SK-N-SH (cell line): ENCODE measurements at regions of chr5 and their contacts with region 1.

Region 1: DNA sequence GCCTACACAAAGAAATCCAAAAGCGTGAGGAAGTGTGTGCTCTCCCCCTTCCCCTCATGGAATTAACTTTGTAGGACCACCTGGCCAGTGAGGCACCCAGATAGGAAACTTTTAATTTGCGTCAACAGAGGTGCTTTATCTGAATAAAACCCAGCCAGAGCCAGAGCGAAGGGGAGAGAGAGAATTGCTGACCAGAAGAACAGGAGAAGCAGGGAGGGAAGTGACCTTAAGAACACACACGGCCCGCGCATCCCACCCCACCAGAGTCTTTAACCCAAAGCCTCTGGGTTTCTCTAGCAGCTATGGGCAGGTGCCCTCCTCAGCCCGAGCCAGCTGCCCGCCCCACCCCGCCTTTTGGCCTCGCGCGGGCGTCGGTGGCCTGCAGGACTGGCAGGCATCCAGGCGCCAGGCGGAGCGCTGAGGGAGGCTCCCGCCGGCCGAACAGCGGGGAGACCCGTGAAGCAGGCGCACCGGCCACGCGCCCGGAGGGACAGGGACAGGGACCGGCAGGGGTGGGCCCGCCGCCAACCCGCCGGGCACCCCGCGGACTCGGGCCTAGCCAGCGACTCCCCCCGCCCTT is 580 bp downstream of the ERAP1 start:
- DNase-seq: peak; percentile 89
- H3K4me3 ChIP-seq: peak overlapping the region; percentile 66 to 81
- H3K27ac ChIP-seq: peak overlapping the region; percentile 90 to 92
- H3K4me1 ChIP-seq: peaks cover 3 to 8% of the 10 kb centered on the region in 2 experiments; a peak in 3 of 4 replicates
- H3K27me3 ChIP-seq: no peaks in the 10 kb centered on the region
- CTCF ChIP-seq: no peak
- EP300 ChIP-seq: no peak
- RAD21 ChIP-seq: no peak

Region 2: DNA sequence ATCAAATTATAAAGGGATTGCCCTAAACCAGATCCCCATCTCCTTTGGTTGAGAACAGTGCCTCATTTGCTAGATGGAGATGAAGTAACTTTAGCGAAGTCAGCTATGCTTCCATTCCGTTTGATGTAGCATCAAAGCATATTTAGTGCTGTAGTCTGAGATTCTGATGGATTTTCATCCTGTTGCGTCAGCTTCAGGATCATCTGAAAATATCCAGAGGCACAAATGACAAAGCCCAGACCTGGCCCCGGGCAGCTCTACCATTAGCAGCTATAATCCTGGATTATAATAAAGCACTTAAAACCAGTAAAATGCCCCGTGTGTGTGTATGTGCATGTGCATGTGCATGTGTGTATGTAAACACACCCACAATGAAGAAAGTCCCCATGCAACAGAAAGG is 44.1 kb before region 1 on chr5:
- CTCF ChIA-PET with region 1: no interaction called
- POLR2A ChIA-PET with region 1: interaction called, 12 read pairs
- DNase-seq: peak; percentile 27
- H3K4me3 ChIP-seq: no peak overlapping the region
- H3K27ac ChIP-seq: peak overlapping the region; percentile 10 to 19; a peak in 1 of 4 replicates
- H3K4me1 ChIP-seq: peaks cover 3 to 11% of the 10 kb centered on the region in 2 experiments; a peak in 3 of 4 replicates
- H3K27me3 ChIP-seq: no peaks in the 10 kb centered on the region
- CTCF ChIP-seq: no peak
- EP300 ChIP-seq: peak in 1 of 2 experiments; percentile 81; a peak in 2 of 4 replicates
- RAD21 ChIP-seq: no peak